Motor neuron (in vitro differentiated cells): ENCODE measurements at regions of chr14 and their contacts with region 1.

Region 1: DNA sequence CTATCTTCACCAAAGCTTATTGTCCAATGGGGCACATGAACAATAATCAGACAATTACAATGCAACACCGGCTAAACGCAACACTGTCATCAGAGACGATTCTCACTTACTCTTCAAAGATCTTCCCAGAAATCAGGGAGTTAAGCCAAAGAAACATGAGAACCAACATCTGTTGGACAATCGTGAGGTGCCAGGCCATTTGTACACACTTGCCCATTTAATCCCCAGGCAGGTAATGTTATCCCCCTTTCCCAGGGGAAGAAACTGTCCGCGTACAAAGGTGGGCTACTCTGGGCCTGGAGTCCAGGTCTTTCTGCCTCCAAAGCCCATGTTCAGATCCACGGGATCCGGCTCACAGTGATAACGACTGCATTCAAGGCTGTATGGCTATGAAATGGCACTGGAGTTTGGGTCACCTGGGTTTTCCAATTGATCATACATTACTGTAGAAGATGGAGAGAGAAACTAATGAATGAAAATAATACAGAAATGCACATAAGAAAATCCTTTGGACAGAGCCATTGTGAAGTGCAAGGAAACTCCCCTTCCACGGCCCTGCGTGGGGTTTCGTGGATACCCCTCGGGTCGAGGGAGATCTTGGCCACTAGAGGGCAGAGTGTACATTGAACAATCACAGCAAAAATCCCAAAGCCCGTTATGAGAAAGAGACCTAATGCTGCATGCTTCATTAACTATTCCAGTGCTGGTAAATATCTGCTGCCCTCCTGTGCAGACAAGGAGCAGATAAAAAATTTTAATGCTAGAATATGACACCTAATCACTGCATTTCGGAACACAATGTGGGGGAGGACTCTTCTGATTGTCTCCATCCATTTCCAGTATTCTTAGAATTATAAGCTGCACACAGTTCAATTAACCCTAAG is 111.4 kb downstream of the EGLN3 start:
- ATAC-seq: peak; percentile 46 to 88 (median 61)
- H3K4me3 ChIP-seq: no peak overlapping the region
- H3K27ac ChIP-seq: no peak overlapping the region
- H3K4me1 ChIP-seq: peaks cover 0 to 10% of the 10 kb centered on the region in 2 donors

Region 2: DNA sequence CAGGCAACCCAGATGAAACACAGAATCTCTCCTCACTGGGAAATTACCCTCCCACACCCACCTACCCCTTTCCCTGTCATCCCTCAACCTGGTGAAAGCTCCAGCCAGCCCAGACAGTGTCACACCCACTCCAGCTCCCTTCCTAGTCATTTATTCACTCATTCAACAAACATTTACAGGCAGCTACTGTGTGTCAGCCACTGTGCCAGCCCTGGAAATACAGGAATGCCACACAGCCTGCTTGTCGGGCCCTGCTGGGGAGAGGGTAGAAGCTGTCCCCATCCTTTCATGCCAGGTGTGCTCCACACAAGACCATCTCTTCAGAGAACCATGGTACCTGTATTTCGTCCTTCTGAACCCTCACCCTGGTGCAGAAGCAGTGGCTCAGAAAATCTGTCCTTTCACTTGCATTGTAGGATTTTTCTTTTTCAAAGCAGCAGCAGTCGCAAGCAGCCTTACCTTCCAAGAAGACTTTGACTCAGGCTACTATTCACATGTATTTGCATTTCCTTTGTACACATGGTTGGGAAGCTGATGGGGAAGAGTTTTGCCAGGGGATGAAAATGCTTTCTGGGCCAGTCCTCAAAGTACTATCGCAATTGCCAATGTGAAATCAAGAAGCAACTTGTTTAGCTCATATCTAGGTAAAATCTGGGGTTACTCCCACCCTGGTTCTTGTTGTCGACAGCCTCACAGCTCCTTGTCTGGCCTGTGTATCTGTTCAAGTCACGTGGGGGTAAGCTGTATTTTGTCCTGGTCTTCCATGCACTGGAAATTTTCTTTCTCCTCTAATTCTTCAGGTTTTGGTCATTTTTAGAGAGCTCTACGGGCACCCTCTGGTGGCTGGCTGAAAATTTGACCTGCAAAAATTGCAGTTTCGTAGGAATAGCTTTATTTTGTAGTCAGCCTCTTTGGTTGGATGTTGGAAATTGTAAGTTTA is 258.9 kb after region 1 on chr14:
- in situ Hi-C with region 1: loop called in 3 of 9 experiments (anchors 25 kb)
- ATAC-seq: peak; percentile 25 to 81 (median 64)
- H3K4me3 ChIP-seq: no peak overlapping the region
- H3K27ac ChIP-seq: peak overlapping the region in 1 of 2 donors; percentile 19
- H3K4me1 ChIP-seq: peaks cover 18 to 24% of the 10 kb centered on the region in 2 donors

Region 3: GRCh38 chr14:34227834-34228649 is 388.6 kb after region 1 on chr14:
- in situ Hi-C with region 1: loop called in 2 of 9 experiments (anchors 10 to 25 kb)
- ATAC-seq: peak; percentile 82 to 96 (median 91)
- H3K4me3 ChIP-seq: peak overlapping the region in 2 of 5 donors; percentile 8 to 12
- H3K27ac ChIP-seq: no peak overlapping the region
- H3K4me1 ChIP-seq: peaks cover 10 to 11% of the 10 kb centered on the region in 2 donors

Region 4: DNA sequence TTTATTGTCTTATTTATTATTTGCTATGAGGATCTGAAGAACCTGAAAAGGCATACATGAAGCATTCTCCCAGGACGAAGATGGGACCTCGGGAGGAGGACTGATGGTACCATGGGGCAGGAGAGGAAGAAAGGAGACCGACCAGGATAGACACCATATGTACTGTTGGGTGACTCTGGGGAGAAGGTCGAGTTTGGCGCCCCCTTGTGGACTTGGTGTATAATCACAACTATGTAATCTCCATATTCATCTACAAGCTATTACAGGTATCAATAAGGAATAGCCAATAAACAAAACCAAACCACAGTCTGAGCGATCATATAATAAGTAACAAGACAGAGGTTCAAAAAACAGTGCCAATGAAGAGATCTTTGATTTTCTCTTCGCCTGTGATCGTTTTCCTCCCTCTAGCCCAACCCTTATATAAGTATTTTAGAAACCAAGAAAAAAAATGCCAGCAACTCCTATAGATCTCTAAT is 483.5 kb after region 1 on chr14:
- in situ Hi-C with region 1: loop called in 1 of 9 experiments (anchors 25 kb)
- ATAC-seq: peak in 5 of 8 experiments; percentile 40 to 84 (median 78)
- H3K4me3 ChIP-seq: no peak overlapping the region
- H3K27ac ChIP-seq: no peak overlapping the region
- H3K4me1 ChIP-seq: no peaks in the 10 kb centered on the region